Gastrocnemius medialis (tissue), 4 donors: ENCODE measurements at regions of chr14 and their contacts with region 1.

Region 1: DNA sequence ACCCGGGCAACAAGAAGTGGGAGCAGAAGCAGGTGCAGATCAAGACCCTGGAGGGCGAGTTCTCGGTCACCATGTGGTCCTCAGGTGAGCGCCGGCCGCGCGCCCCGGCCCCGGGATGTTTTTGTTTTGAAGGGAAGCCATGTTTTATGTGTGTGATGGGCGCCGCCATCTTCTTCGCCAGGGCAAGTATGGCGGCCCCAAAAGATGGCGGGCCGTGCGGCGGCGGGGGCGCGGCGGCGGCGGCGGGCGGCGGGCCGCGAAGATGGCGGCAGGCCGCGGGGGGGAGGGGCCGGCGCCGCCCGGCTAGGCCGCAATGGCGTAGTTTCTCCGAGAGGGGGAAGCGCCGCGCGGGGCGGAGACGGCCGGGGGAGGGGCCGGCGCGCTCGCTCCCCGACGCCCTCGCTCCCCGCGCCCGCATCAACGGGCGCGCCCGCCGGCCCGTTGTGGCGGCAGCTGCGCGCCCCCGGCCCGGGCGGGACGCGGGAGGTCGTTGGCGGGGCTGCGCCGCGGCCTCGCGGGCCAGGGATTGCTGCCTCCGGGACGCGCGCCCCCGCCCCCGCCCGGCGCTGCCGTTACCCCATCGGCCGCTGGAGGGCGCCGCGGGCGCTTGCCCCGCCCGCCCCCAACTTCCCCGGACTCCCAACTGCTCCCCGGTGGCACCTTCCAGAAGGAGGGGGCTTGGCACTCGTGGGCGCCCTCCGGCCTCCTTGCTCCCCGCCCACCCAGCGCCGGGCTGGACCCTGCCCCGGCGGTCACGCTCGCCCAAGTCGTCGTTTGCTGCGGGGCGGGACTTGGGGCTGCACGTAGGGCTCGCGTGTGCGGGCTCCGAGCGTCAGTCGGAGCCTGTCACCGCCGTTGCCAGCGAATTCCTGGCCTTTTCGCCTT is 1.1 kb downstream of the YY1 start:
- DNase-seq: peak; percentile 77 to 92
- ATAC-seq: peak; percentile 57
- H3K4me3 ChIP-seq: peak overlapping the region; percentile 85 to 100 (median 94)
- H3K27ac ChIP-seq: peak overlapping the region; percentile 96 to 100 (median 98)
- H3K4me1 ChIP-seq: peaks cover 41 to 51% of the 10 kb centered on the region in 2 donors
- H3K27me3 ChIP-seq: no peaks in the 10 kb centered on the region
- CTCF ChIP-seq: peak; percentile 64 to 88 (median 85)
- POLR2A ChIP-seq: peak; percentile 56 to 70

Region 2: GRCh38 chr14:100192672-100193416 is 47.2 kb before region 1 on chr14:
- in situ Hi-C with region 1: no loop called
- intact Hi-C with region 1: loop called (anchors 2 kb)
- DNase-seq: peak; percentile 98 to 99
- ATAC-seq: peak; percentile 96 to 98
- H3K4me3 ChIP-seq: peak overlapping the region; percentile 54 to 67 (median 60)
- H3K27ac ChIP-seq: peak overlapping the region; percentile 82 to 92 (median 84)
- H3K4me1 ChIP-seq: peaks cover 5 to 9% of the 10 kb centered on the region in 2 donors
- H3K27me3 ChIP-seq: no peaks in the 10 kb centered on the region
- CTCF ChIP-seq: peak; percentile 56 to 96 (median 92)
- POLR2A ChIP-seq: peak in 1 of 2 donors; percentile 61

Region 3: DNA sequence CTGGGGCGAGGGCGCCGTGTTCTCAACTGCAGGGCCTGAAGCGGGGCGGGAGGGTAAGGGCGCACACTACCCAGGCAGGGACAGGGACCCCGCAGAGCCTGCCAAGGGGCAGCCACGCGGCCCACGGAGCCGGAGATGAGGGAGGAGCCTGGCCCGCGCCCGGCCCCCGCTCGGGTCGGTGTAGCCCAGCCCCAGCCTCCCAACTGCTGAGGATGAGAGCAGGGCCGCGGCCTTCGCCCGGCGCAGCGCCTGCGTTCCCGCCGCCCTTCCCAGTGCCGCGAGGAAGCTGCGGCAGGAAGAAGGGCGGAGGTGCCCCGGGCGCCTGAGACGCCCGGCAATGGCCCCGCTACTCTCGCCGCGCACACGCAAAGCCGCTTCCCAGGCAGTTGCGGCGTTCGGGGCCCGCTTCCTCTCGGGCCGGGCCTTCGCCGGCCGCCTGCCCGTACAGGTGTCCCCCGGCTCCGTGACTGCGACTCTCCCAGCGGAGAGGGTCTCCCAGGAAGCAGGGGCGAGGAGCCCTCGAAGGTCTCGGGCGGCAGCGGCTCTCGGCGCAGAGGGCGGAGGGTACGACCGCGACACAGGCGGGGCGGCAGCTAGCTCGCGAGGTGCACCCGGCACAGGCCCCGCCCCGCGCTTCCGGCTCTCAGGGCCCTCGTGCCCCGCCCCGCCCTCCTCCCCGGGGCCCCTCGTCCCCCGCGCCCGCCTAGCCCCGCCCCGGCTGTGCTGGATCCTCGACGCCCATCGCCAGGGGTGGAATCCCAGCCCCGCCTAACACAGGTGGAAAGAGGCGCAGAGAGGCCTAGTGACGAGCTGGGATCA is 25.9 kb before region 1 on chr14:
- in situ Hi-C with region 1: no loop called
- intact Hi-C with region 1: loop called (anchors 1 kb)
- DNase-seq: peak; percentile 64 to 80
- ATAC-seq: peak; percentile 94 to 95
- H3K4me3 ChIP-seq: peak overlapping the region; percentile 74 to 97 (median 94)
- H3K27ac ChIP-seq: peak overlapping the region; percentile 85 to 97 (median 96)
- H3K4me1 ChIP-seq: peaks cover 6 to 7% of the 10 kb centered on the region in 2 donors
- H3K27me3 ChIP-seq: no peaks in the 10 kb centered on the region
- CTCF ChIP-seq: no peak
- POLR2A ChIP-seq: peak; percentile 73 to 74

Region 4: GRCh38 chr14:100285021-100285912 is 45.2 kb after region 1 on chr14:
- in situ Hi-C with region 1: no loop called
- intact Hi-C with region 1: loop called (anchors 5 kb)
- DNase-seq: peak in 1 of 2 donors; percentile 46
- ATAC-seq: peak; percentile 82 to 88
- H3K4me3 ChIP-seq: peak overlapping the region; percentile 73 to 98 (median 84)
- H3K27ac ChIP-seq: peak overlapping the region; percentile 88 to 98 (median 92)
- H3K4me1 ChIP-seq: peaks cover 31 to 36% of the 10 kb centered on the region in 2 donors
- H3K27me3 ChIP-seq: no peaks in the 10 kb centered on the region
- CTCF ChIP-seq: peak; percentile 68 to 89 (median 80)
- POLR2A ChIP-seq: peak in 1 of 2 donors; percentile 37

Region 5: DNA sequence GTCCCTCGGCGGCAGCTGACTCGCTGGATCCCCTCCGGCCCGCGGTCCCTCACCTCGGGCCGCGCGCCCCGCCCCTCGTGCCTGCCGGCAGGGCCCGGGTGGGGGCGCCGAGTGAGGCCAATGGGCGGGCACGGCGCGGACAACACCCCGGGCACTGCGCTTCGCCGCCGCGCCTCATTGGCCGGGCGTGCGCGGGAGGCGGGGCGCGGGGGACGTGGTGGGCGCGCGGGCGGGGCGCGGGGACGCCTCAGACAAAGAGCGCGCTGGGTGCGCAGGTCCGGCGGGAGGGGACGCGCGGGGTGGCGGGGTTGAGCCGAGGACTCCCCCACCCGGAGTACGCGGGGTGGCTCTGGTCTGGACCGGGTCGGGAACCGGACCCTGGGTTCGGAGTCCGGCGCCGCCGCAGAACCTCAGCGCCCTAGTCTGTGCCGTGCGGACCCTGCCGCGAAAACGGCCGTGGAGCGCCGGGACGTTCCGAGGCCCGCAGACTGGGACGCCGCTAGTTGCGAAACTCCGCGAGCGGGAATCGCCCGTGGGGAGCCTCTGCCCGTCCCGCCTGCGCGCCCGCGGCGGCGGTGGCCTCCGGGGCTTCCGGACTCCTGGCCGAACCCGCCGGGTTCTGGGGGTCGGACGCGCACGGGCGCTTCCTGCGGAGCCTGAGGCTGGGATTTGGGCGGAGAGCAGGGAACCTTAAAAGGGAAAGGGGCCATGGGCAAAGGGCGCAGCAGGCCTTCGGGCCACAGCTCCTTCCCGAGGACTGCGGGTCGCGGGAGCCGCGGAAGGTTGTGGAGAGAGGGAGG is 66.5 kb after region 1 on chr14 and contains the start of gene SLC25A29:
- in situ Hi-C with region 1: no loop called
- intact Hi-C with region 1: loop called (anchors 2 kb)
- DNase-seq: peak; percentile 79 to 89
- ATAC-seq: peak; percentile 83 to 85
- H3K4me3 ChIP-seq: peak within 1 kb of the TSS; percentile 79 to 99 (median 96)
- H3K27ac ChIP-seq: peak within 1 kb of the TSS; percentile 93 to 98 (median 95)
- H3K4me1 ChIP-seq: peaks cover 10 to 27% of the 10 kb centered on the region in 2 donors
- H3K27me3 ChIP-seq: no peaks in the 10 kb centered on the region
- CTCF ChIP-seq: no peak
- POLR2A ChIP-seq: peak; percentile 89 to 94
- total RNA-seq, gene SLC25A29: 9.0 to 17.4 (median 13.4) TPM

Region 6: GRCh38 chr14:100317912-100318808 is 78.1 kb after region 1 on chr14:
- in situ Hi-C with region 1: no loop called
- intact Hi-C with region 1: loop called (anchors 2 kb)
- DNase-seq: peak in 1 of 2 donors; percentile 63
- ATAC-seq: peak; percentile 73 to 82
- H3K4me3 ChIP-seq: peak overlapping the region; percentile 44 to 60 (median 50)
- H3K27ac ChIP-seq: peak overlapping the region; percentile 17 to 58 (median 40)
- H3K4me1 ChIP-seq: peaks cover 9 to 11% of the 10 kb centered on the region in 2 donors
- H3K27me3 ChIP-seq: no peaks in the 10 kb centered on the region
- CTCF ChIP-seq: peak; percentile 57 to 94 (median 80)
- POLR2A ChIP-seq: no peak

Region 7: GRCh38 chr14:100375963-100376735 is 136.1 kb after region 1 on chr14:
- in situ Hi-C with region 1: no loop called
- intact Hi-C with region 1: loop called (anchors 1 kb)
- DNase-seq: peak; percentile 85 to 92
- ATAC-seq: peak; percentile 86 to 90
- H3K4me3 ChIP-seq: peak within 1 kb of the TSS; percentile 73 to 90 (median 85)
- H3K27ac ChIP-seq: peak within 1 kb of the TSS; percentile 80 to 88 (median 86)
- H3K4me1 ChIP-seq: peaks cover 20 to 22% of the 10 kb centered on the region in 2 donors
- H3K27me3 ChIP-seq: no peaks in the 10 kb centered on the region
- CTCF ChIP-seq: no peak
- POLR2A ChIP-seq: peak; percentile 78 to 79